MCF 10A (cell line): ENCODE measurements at regions of chr3 and their contacts with region 1.

Region 1: DNA sequence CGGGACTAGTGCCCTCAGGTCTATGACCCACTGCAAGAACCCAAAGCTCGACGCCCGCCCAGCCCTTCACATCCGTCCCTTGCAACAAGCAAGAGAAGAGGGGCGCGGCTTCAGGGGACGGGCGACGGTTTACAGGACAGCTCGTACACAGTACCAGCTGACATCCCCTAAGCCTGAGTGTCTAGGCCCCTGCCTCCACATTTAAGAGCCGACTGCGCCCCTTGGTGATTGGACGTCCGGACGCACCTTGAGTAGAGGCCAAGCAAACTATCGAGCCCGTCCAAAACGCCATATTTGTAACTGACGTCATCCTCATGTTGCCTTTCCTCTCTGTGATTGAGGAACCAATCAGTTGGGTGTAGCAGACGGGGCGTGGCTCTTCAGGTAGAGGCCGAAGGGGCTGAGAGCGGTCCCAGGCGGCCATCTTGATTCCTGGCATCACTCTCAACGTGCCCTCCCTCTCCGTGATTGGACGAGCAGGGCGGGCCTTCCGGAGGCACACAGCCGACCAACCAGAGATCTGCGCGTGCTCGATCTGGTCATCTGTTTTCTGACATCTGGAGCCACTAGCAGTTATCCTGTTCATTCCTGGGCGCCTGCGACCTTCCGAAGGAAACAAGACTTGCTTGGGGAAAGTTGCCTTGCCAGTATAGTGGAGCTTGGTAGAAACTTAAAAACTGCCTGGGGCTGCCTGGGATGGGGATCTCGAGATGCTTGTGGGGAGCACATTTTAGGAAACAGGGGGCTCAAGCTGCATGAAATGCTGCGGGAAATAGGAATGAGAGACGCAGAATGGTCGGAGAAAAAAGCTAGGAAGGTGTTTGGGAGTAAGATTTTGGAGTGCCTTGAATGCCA is 4.0 kb upstream of the RPL14 start:
- DNase-seq: peak; percentile 99
- H3K4me3 Mint-ChIP-seq: peak overlapping the region; percentile 90
- H3K27ac Mint-ChIP-seq: peak overlapping the region; percentile 95
- H3K4me1 Mint-ChIP-seq: peaks cover 20% of the 10 kb centered on the region
- H3K27me3 Mint-ChIP-seq: no peaks in the 10 kb centered on the region
- CTCF ChIP-seq: no peak

Region 2: GRCh38 chr3:40329071-40329470 is 124.0 kb before region 1 on chr3:
- CTCF ChIA-PET with region 1: interaction called, 38 read pairs
- POLR2A ChIA-PET with region 1: interaction called, 18 read pairs
- intact Hi-C with region 1: loop called (anchors 1 kb)
- DNase-seq: no peak
- H3K4me3 Mint-ChIP-seq: no peak overlapping the region
- H3K27ac Mint-ChIP-seq: no peak overlapping the region
- H3K4me1 Mint-ChIP-seq: no peaks in the 10 kb centered on the region
- H3K27me3 Mint-ChIP-seq: no peaks in the 10 kb centered on the region
- CTCF ChIP-seq: no peak

Region 3: DNA sequence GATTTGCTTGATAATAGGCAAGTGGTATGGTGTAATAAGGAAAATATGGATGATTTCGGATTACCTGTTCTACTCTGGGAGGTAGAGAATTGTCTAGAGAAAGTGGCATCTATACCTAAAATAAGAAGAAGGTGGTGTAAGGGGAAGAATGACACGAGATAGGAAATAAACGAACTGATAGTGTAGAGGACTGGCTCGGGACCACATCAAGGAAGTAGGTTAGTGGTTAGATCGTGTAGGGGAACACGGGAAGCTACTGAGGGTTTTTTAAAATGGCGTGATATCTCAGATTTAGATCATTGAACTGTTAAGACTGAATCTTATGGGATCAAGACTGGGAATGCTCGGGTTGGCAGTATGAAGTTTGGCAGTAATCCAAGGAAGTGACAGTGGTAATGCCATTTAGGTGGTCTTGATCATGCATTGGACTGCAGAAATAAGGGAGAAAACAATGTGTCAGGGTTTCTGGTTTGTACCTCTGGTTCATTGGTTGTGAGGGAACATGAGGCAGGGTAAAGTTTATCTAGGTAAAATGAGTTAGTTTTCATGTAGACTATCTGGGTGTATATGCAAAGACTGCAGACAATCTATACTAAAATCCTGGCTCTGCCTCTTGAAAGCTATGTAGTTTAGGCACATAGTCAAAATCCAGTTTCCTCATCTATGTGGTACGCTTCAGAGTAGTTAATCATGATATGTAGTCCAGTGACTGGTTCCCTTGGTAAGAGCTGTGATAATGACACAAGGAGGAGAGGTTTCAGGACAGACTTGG is 11.4 kb after region 1 on chr3:
- CTCF ChIA-PET with region 1: interaction called, 3 read pairs
- POLR2A ChIA-PET with region 1: interaction called, 15 read pairs
- intact Hi-C with region 1: no loop called
- DNase-seq: no peak
- H3K4me3 Mint-ChIP-seq: no peak overlapping the region
- H3K27ac Mint-ChIP-seq: no peak overlapping the region
- H3K4me1 Mint-ChIP-seq: no peaks in the 10 kb centered on the region
- H3K27me3 Mint-ChIP-seq: no peaks in the 10 kb centered on the region
- CTCF ChIP-seq: no peak

Region 4: DNA sequence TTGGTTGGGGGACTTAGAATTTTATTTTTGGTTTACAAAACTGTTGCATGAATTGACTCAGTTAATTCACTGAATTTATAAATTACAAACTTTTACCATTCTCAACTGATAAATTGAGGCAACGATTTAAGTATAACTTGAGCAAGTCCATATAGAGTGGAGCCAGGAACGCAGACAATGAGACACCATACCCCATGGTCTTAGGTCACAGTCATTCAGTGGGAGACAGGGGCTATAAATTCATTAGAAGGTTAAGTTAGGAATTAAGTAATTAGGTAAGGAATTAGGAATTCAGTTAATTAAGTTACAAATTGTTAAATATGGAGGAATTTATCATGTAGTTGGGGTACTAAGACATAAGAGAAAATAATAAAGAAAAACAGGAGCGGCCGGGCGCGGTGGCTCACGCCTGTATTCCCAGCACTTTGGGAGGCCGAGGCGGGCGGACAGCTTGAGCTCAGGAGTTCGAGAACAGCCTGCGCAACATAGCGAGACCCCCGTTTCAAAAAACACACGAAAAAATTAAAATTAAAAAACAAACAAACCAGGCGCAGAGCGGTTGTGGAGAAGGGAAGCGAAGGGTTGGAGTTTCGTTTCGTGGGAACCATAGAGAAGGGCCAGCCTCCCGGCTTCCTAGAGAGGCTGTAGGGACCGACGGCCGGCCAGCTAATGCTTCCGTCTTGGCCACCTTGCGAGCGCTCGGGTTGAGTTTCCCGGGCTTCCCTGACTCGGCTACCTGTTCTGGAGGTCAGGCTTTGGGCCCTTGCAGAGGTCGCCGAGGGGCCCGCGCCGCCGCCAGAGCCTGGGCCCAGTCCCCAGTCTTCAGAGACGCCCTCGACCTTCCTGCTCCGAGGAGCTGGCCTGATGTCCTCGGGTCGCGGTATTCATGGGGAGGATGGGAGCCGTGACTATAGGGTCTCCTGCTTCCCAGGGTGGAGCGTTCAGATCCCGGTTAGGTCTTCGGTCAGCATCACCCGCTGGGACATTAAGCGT is 23.7 kb after region 1 on chr3 and contains the start of gene ZNF619:
- CTCF ChIA-PET with region 1: interaction called, 4 read pairs
- POLR2A ChIA-PET with region 1: interaction called, 40 read pairs
- intact Hi-C with region 1: no loop called
- DNase-seq: peak; percentile 80
- H3K4me3 Mint-ChIP-seq: peak within 1 kb of the TSS; percentile 90
- H3K27ac Mint-ChIP-seq: peak within 1 kb of the TSS; percentile 99
- H3K4me1 Mint-ChIP-seq: peaks cover 11% of the 10 kb centered on the region
- H3K27me3 Mint-ChIP-seq: no peaks in the 10 kb centered on the region
- CTCF ChIP-seq: no peak
- total RNA-seq, gene ZNF619: 8.3 and 8.7 TPM in 2 replicates

Region 5: DNA sequence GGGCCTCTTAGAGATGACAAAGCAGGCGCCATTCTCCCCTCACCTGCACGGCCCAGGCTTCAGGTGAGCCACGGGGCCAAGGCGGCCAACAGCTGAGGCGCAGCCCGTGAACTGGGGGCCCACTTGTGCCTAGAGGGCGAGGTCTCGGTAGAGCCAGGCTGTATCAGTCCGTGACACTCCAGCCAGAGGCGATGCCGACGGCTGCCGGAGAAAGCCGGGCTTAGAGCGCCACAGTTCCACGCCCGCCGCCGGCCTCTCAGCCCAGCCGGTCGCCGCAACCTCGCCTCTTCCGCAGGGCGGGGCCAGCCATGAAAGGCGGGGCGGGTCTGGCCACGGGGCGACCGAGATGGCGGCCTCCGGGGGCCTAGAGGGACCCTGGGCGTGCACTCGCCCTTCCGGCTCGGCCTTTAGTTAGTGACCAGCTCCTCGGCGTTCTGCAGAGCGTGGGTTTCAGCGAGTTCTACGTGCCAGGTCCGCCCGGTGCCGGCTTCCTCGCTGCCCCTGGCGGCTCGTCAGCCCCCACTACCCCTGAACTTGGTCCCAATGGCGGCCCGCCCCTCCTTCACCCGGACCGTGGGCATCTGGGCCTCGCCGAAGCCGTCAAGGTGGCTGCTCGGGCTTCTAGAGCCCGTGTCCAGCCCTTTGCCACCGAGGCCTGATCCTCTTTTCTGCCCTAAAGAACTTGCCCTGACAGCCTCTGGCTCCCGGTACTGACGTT is 71.6 kb after region 1 on chr3 and contains the start of gene ZNF621:
- CTCF ChIA-PET with region 1: no interaction called
- POLR2A ChIA-PET with region 1: interaction called, 36 read pairs
- intact Hi-C with region 1: loop called (anchors 2 kb)
- DNase-seq: peak; percentile 88
- H3K4me3 Mint-ChIP-seq: peak within 1 kb of the TSS; percentile 90
- H3K27ac Mint-ChIP-seq: peak within 1 kb of the TSS; percentile 98
- H3K4me1 Mint-ChIP-seq: peaks cover 20% of the 10 kb centered on the region
- H3K27me3 Mint-ChIP-seq: no peaks in the 10 kb centered on the region
- CTCF ChIP-seq: no peak
- total RNA-seq, gene ZNF621: 39.6 and 44.5 TPM in 2 replicates

Region 6: GRCh38 chr3:40653001-40653400 is 199.9 kb after region 1 on chr3:
- CTCF ChIA-PET with region 1: no interaction called
- POLR2A ChIA-PET with region 1: no interaction called
- intact Hi-C with region 1: no loop called
- DNase-seq: no peak
- H3K4me3 Mint-ChIP-seq: no peak overlapping the region
- H3K27ac Mint-ChIP-seq: no peak overlapping the region
- H3K4me1 Mint-ChIP-seq: no peaks in the 10 kb centered on the region
- H3K27me3 Mint-ChIP-seq: no peaks in the 10 kb centered on the region
- CTCF ChIP-seq: no peak